Endothelial cell of umbilical vein (primary cell): ENCODE measurements at regions of chr19 and their contacts with region 1.

Region 1: GRCh38 chr19:53520550-53521372 is 17.2 kb upstream of the ZNF331 start:
- DNase-seq: peak; percentile 100
- H3K4me3 ChIP-seq: peak overlapping the region; percentile 63 to 79 (median 77)
- H3K27ac ChIP-seq: peak overlapping the region; percentile 39
- H3K4me1 ChIP-seq: peaks cover 8% of the 10 kb centered on the region
- H3K27me3 ChIP-seq: no peaks in the 10 kb centered on the region
- CTCF ChIP-seq: no peak
- POLR2A ChIP-seq: peak; percentile 55

Region 2: GRCh38 chr19:53431399-53432087 is 89.2 kb before region 1 on chr19 and contains the start of gene ZNF761:
- CTCF ChIA-PET with region 1: interaction called, 5 read pairs
- POLR2A ChIA-PET with region 1: no interaction called
- dilution Hi-C with region 1: no loop called
- intact Hi-C with region 1: loop called (anchors 2 kb)
- DNase-seq: peak; percentile 96
- H3K4me3 ChIP-seq: peak within 1 kb of the TSS; percentile 74 to 98 (median 98)
- H3K27ac ChIP-seq: peak within 1 kb of the TSS; percentile 80
- H3K4me1 ChIP-seq: peaks cover 14% of the 10 kb centered on the region
- H3K27me3 ChIP-seq: no peaks in the 10 kb centered on the region
- CTCF ChIP-seq: peak in 1 of 2 donors; percentile 59
- POLR2A ChIP-seq: peak; percentile 83
- total RNA-seq, gene ZNF761: 7.3 and 8.8 TPM in 2 replicates

Region 3: DNA sequence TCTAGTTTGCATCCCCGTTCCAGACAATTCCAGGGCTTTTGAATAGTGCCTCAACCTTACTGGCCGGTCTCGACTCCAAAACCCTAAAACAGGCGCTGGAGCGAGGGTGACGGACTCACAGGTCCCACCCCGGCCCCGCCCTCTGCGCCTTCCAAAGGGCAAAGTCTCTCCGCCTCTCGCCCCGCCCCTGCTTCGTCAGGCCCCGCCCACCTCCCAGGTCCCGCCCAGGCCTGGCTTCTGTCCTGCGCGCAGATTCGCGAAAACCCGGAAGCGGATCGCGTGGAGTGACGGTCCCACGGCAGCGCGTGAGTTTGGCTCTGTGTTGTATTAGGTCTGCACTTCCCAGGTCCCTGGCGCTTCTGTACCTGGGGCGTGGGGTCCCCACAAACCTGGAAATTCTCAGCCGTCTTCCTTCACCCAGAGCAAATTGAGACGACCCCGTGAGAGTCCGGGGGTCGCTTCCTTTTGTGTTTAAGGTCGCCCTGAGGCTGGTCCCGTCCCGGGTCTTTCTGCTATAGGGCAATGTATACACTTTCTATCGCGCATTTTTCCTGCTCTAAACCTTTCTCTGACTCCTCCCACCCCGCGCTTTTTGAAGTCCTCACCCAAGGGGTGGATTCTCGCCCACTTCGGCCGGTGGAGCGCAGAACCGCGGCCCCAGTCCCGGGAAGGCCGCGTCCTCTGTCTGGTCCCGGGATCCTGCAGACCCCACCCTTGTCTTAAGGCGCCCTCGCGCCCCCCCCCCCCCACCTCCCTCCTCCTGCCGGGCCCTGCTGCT is 53.1 kb before region 1 on chr19 and contains the start of gene ZNF813:
- CTCF ChIA-PET with region 1: no interaction called
- POLR2A ChIA-PET with region 1: no interaction called
- dilution Hi-C with region 1: no loop called
- intact Hi-C with region 1: loop called (anchors 1 kb)
- DNase-seq: peak; percentile 89
- H3K4me3 ChIP-seq: peak within 1 kb of the TSS; percentile 68 to 86 (median 81)
- H3K27ac ChIP-seq: peak within 1 kb of the TSS; percentile 69
- H3K4me1 ChIP-seq: peaks cover 4% of the 10 kb centered on the region
- H3K27me3 ChIP-seq: no peaks in the 10 kb centered on the region
- CTCF ChIP-seq: no peak
- POLR2A ChIP-seq: peak; percentile 71
- total RNA-seq, gene ZNF813: 2.3 TPM in 2 replicates

Region 4: DNA sequence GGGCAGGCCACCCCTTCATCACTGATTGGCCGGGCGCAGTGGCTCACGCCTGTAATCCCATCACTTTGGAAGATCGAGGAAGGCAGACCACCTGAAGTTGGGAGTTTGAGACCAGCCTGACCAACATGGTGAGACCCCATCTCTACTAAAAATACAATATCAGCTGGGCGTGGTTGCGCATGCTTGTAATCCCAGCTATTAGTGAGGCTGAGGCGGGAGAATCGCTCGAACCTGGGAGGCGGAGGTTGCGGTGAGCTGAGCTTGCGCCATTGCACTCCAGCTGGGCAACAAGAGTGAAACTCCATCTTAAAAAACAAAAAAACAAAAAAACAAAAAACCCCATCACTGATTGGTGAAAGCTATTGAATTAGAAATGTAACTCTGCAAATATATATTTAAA is 22.2 kb before region 1 on chr19:
- CTCF ChIA-PET with region 1: no interaction called
- POLR2A ChIA-PET with region 1: no interaction called
- dilution Hi-C with region 1: no loop called
- intact Hi-C with region 1: no loop called
- DNase-seq: no peak
- H3K4me3 ChIP-seq: no peak overlapping the region
- H3K27ac ChIP-seq: no peak overlapping the region
- H3K4me1 ChIP-seq: no peaks in the 10 kb centered on the region
- H3K27me3 ChIP-seq: no peaks in the 10 kb centered on the region
- CTCF ChIP-seq: no peak
- POLR2A ChIP-seq: no peak

Region 5: DNA sequence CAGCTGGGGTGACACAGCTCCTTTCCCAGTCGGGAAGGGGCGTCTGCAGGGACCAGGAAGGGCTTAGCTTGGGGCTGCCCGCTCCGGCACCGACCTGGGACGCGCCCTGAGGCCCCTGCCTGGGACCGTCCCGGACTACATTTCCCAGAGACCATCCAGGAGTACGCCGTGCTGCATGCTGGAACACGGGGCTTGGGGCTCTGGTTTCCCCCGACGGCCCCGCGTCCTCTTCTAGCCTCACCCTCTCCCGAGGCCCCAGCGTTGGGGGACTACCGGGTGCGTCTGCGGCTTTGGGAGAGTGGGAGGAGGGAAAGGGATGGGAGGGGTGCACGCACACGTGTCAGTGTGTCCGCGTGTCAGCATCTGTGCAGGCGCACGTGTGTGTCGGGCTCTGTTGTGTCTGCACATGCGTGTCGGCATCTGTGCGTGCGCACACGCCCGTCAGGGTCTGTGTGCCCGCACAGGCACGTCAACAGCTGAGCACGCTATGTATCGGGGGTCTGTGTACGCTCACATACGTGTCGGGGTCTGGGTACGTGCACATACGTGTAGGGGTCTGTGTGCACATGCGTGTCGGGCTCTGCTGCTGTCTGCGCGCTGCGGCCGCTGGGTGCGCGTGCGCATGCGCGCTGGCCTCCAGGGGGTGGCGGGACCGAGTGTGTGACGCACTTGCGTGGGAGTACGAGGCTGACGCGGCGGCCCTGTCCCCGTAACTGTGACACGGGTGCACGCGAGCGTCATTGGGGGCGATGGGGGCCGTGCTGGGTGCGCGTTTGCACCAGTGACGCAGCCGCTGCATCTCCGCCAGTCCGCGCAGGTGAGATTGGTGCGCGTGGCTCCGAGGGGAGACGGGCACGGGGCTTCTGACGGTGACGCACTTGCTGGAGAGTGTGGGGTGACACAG is 17.0 kb after region 1 on chr19 and contains the start of gene ZNF331:
- CTCF ChIA-PET with region 1: interaction called, 4 read pairs
- POLR2A ChIA-PET with region 1: no interaction called
- dilution Hi-C with region 1: no loop called
- intact Hi-C with region 1: loop called (anchors 1 kb)
- DNase-seq: peak; percentile 82
- H3K4me3 ChIP-seq: peak within 1 kb of the TSS in 2 of 3 experiments; percentile 63 to 64
- H3K27ac ChIP-seq: no peak within 1 kb of the TSS
- H3K4me1 ChIP-seq: no peaks in the 10 kb centered on the region
- H3K27me3 ChIP-seq: no peaks in the 10 kb centered on the region
- CTCF ChIP-seq: peak; percentile 29 to 51
- POLR2A ChIP-seq: peak; percentile 48
- total RNA-seq, gene ZNF331: 11.2 TPM in 2 replicates